AG04450 (cell line): ENCODE measurements at regions of chr16 and their contacts with region 1.

Region 1: GRCh38 chr16:27318392-27319226 is 4.8 kb downstream of the IL4R start:
- DNase-seq: no peak
- H3K4me3 ChIP-seq: no peak overlapping the region
- H3K27ac ChIP-seq: peak overlapping the region; percentile 55
- H3K27me3 ChIP-seq: no peaks in the 10 kb centered on the region
- CTCF ChIP-seq: no peak

Region 2: DNA sequence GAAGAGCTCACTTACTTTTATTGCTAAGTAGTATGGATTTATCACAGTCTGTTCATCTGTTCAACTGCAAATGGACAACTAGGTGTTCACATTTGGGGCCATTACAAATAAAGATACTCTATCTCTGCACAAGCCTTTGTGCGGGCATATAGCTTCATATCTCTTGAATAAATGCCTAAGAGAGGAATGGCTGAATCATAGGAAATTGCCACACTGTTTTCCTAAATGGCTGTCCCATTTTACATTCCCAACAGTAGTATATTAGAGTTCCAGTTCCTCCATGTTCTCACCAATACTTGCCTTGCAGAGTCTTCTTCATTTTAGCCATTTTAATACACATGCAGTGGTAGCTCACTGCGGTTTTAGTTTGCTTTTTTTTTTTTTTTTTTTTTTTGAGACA is 70.6 kb before region 1 on chr16:
- CTCF ChIA-PET with region 1: interaction called, 3 read pairs
- POLR2A ChIA-PET with region 1: interaction called, 18 read pairs
- DNase-seq: no peak
- H3K4me3 ChIP-seq: no peak overlapping the region
- H3K27ac ChIP-seq: no peak overlapping the region
- H3K27me3 ChIP-seq: no peaks in the 10 kb centered on the region
- CTCF ChIP-seq: no peak